ENCODE measurements at regions of chr20 and their contacts with region 1.

Region 1: GRCh38 chr20:50987592-50988210 is 29.1 kb downstream of the MOCS3 start:
- DNase-seq: peak; percentile 70
- ATAC-seq: peak; percentile 98
- H3K4me3 Mint-ChIP-seq: no peak overlapping the region
- H3K27ac Mint-ChIP-seq: no peak overlapping the region
- H3K4me1 Mint-ChIP-seq: no peaks in the 10 kb centered on the region
- H3K27me3 Mint-ChIP-seq: peaks cover 20% of the 10 kb centered on the region
- CTCF ChIP-seq: peak; percentile 89

Region 2: GRCh38 chr20:50879649-50880550 is 107.8 kb before region 1 on chr20:
- CTCF ChIA-PET with region 1: no interaction called
- POLR2A ChIA-PET with region 1: no interaction called
- intact Hi-C with region 1: no loop called
- DNase-seq: no peak
- ATAC-seq: no peak
- H3K4me3 Mint-ChIP-seq: no peak overlapping the region
- H3K27ac Mint-ChIP-seq: no peak overlapping the region
- H3K4me1 Mint-ChIP-seq: no peaks in the 10 kb centered on the region
- H3K27me3 Mint-ChIP-seq: no peaks in the 10 kb centered on the region
- CTCF ChIP-seq: no peak

Region 3: GRCh38 chr20:50975701-50976330 is 11.9 kb before region 1 on chr20:
- CTCF ChIA-PET with region 1: interaction called, 39 read pairs
- POLR2A ChIA-PET with region 1: interaction called, 3 read pairs
- intact Hi-C with region 1: no loop called
- DNase-seq: no peak
- ATAC-seq: no peak
- H3K4me3 Mint-ChIP-seq: no peak overlapping the region
- H3K27ac Mint-ChIP-seq: no peak overlapping the region
- H3K4me1 Mint-ChIP-seq: peaks cover 12% of the 10 kb centered on the region
- H3K27me3 Mint-ChIP-seq: peaks cover 21% of the 10 kb centered on the region
- CTCF ChIP-seq: no peak

Region 4: DNA sequence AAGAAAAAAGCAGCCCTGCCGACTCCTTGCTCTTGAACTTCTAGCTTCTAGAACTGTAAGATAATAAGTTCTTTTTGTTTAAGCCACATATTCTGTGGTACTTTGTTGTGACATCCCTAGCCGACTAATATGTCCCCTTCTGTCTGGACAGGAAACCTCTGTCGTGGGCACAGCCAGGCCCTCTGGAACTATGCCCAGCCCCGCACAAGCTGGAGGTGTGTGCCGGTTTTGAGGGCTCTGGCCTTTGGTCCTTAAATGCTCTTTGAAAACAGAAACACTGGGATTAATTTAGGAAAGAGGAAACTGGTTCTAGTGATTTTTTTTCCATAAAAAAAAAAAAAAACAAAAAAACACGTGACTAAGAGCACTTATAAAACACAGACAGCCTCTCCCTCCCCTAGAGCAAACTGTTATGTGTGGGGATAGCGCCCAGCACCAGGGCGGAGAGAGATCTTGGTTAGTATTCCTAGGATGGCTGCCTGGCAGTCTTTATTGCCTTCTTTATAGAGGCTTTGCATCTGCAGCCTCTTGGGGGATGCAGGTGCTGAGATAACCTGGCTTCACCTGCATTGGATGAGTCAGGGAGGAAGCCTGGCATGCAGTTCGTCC is 310.5 kb after region 1 on chr20:
- CTCF ChIA-PET with region 1: interaction called, 210 read pairs
- POLR2A ChIA-PET with region 1: no interaction called
- intact Hi-C with region 1: no loop called
- DNase-seq: no peak
- ATAC-seq: no peak
- H3K4me3 Mint-ChIP-seq: no peak overlapping the region
- H3K27ac Mint-ChIP-seq: no peak overlapping the region
- H3K4me1 Mint-ChIP-seq: no peaks in the 10 kb centered on the region
- H3K27me3 Mint-ChIP-seq: no peaks in the 10 kb centered on the region
- CTCF ChIP-seq: no peak

Region 5: GRCh38 chr20:51326201-51326819 is 338.6 kb after region 1 on chr20:
- CTCF ChIA-PET with region 1: interaction called, 30 read pairs
- POLR2A ChIA-PET with region 1: no interaction called
- intact Hi-C with region 1: no loop called
- DNase-seq: no peak
- ATAC-seq: no peak
- H3K4me3 Mint-ChIP-seq: no peak overlapping the region
- H3K27ac Mint-ChIP-seq: no peak overlapping the region
- H3K4me1 Mint-ChIP-seq: no peaks in the 10 kb centered on the region
- H3K27me3 Mint-ChIP-seq: no peaks in the 10 kb centered on the region
- CTCF ChIP-seq: peak; percentile 13

Region 6: GRCh38 chr20:51624157-51624731 is 636.5 kb after region 1 on chr20:
- CTCF ChIA-PET with region 1: interaction called, 3 read pairs
- POLR2A ChIA-PET with region 1: no interaction called
- intact Hi-C with region 1: loop called (anchors 10 kb)
- DNase-seq: peak; percentile 80
- ATAC-seq: peak; percentile 86
- H3K4me3 Mint-ChIP-seq: no peak overlapping the region
- H3K27ac Mint-ChIP-seq: peak overlapping the region; percentile 46
- H3K4me1 Mint-ChIP-seq: peaks cover 10% of the 10 kb centered on the region
- H3K27me3 Mint-ChIP-seq: no peaks in the 10 kb centered on the region
- CTCF ChIP-seq: peak; percentile 87